Dendritic cell treated with granulocyte-macrophage colony-stimulating factor and Interleukin-4, amounts not matched to agents 40 ng/mL and 50 ng/mL, for 4 days (primary cell): ENCODE measurements at regions of chr5 and their contacts with region 1.

Region 1: DNA sequence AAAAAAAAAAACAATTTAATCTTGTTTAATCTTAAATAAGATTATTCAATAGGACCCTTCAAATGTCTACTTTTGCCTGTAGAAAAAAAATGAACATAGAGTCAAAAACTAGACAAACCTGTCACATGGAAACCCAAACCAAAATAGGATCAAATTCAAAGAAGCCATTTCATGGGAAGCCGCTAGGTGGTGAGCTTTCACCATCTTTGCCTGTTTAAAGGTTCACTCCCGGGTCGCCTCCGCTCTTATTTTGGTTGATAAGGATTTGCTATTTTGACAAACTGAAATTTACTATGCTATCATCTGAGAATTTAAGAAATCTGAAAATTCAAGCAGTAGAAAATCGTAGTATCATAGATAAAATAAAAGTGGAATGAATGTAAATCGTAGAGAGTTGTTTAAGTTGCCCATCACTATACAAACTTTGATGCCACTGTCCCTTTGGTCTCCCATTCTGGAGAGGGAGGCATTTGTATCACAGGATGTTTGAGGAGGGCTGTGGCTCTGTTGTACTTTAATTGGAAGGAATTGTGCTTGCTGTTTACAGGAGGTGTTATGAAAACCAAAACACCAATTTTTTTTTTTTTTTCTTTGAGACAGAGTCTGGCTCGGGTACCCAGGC is 43.5 kb upstream of the DNAH5 start:
- H3K4me3 Mint-ChIP-seq: no peak overlapping the region
- H3K27ac Mint-ChIP-seq: no peak overlapping the region
- H3K4me1 Mint-ChIP-seq: peaks cover 6% of the 10 kb centered on the region
- H3K27me3 Mint-ChIP-seq: peaks cover 5% of the 10 kb centered on the region

Region 2: GRCh38 chr5:13632681-13633080 is 355.3 kb before region 1 on chr5:
- intact Hi-C with region 1: no loop called
- H3K4me3 Mint-ChIP-seq: no peak overlapping the region
- H3K27ac Mint-ChIP-seq: no peak overlapping the region
- H3K4me1 Mint-ChIP-seq: no peaks in the 10 kb centered on the region
- H3K27me3 Mint-ChIP-seq: no peaks in the 10 kb centered on the region

Region 3: DNA sequence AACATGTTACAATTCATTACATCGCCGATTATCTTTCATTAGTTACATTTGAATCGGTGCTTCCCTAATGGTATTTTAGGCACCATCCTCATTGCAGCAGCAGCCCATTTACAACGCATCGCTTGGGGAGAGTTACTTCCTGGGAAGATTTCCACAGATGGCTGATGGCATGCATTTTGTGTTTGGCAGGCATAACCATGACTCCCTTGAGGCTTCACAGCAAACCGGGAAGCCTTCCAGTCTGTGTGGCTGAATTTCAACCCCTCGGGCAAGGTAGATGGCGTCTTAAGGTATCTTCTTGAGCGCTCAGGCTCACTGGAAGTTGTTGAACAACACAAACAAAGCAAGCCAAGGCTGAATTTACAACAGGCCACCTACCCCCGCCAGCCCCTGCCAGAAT is 41.8 kb before region 1 on chr5:
- intact Hi-C with region 1: no loop called
- H3K4me3 Mint-ChIP-seq: no peak overlapping the region
- H3K27ac Mint-ChIP-seq: no peak overlapping the region
- H3K4me1 Mint-ChIP-seq: no peaks in the 10 kb centered on the region
- H3K27me3 Mint-ChIP-seq: no peaks in the 10 kb centered on the region

Region 4: DNA sequence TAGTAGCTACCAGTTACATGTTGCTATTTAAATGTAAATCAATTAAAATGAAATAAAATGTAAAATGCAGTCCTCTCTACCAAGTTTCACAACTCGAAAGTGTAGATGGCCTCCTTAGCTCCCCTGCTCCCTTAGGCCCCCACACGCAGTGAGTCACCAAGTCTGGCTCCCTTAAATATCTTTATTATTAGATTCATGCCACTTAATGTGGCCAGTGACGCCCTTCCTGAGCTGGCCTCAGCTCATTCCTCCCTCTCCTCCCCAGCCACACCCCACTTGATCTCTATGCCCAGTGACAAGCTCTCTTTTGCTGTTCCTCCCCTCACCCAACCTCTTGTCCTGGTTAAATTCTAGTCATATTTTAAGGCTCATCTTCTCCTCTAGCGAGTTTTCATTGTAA is 45.0 kb after region 1 on chr5:
- intact Hi-C with region 1: no loop called
- H3K4me3 Mint-ChIP-seq: no peak overlapping the region
- H3K27ac Mint-ChIP-seq: no peak overlapping the region
- H3K4me1 Mint-ChIP-seq: peaks cover 14% of the 10 kb centered on the region
- H3K27me3 Mint-ChIP-seq: peaks cover 10% of the 10 kb centered on the region

Region 5: DNA sequence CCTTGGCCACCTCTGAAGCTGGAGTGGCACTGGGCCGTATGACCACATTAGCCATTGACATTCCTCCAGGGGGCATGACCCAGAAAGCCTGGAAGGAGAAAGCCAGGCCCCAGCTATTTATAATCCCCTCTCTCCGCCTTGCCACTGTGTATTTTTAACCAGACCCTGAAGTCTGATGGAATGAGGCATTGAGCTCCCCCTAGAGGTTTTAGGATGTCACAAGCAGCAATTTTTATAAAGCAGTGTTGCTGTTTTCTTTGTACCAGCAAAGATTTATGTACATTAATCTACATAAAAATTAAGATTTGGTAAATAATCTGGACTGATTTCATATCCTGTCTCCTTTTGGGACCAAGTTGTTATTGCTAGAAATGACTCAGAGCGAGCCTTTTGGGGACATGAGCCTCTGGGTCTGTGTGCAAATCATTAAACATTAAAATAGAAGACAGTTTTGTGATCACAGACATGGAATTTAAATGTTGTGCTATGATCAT is 282.3 kb after region 1 on chr5:
- intact Hi-C with region 1: loop called (anchors 1 kb)
- H3K4me3 Mint-ChIP-seq: no peak overlapping the region
- H3K27ac Mint-ChIP-seq: no peak overlapping the region
- H3K4me1 Mint-ChIP-seq: peaks cover 27% of the 10 kb centered on the region
- H3K27me3 Mint-ChIP-seq: no peaks in the 10 kb centered on the region

Region 6: GRCh38 chr5:14351845-14352712 is 364.1 kb after region 1 on chr5:
- intact Hi-C with region 1: loop called (anchors 5 kb)
- H3K4me3 Mint-ChIP-seq: peak overlapping the region; percentile 13
- H3K27ac Mint-ChIP-seq: peak overlapping the region; percentile 69
- H3K4me1 Mint-ChIP-seq: peaks cover 56% of the 10 kb centered on the region
- H3K27me3 Mint-ChIP-seq: no peaks in the 10 kb centered on the region

Region 7: DNA sequence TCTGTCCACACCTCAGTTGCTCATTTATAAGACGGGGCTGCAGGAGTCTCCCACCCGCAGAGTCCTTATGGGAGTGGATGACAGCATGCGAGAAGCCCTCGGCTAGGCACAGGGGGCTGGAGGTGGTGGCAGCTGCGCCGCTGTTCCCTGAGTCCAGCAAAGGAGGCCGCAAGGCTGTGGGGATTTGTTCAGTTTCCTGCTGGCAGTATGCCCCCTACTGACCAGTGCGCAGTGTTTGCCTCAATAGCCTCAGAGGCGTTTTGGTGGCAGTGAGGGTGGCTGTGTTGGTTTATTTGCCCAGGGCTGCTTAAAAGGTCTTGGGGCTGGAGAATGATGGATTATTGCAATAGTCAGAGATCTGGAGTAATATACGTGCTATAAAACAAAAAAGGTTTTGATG is 417.3 kb after region 1 on chr5:
- intact Hi-C with region 1: loop called (anchors 10 kb)
- H3K4me3 Mint-ChIP-seq: no peak overlapping the region
- H3K27ac Mint-ChIP-seq: no peak overlapping the region
- H3K4me1 Mint-ChIP-seq: no peaks in the 10 kb centered on the region
- H3K27me3 Mint-ChIP-seq: no peaks in the 10 kb centered on the region

Region 8: DNA sequence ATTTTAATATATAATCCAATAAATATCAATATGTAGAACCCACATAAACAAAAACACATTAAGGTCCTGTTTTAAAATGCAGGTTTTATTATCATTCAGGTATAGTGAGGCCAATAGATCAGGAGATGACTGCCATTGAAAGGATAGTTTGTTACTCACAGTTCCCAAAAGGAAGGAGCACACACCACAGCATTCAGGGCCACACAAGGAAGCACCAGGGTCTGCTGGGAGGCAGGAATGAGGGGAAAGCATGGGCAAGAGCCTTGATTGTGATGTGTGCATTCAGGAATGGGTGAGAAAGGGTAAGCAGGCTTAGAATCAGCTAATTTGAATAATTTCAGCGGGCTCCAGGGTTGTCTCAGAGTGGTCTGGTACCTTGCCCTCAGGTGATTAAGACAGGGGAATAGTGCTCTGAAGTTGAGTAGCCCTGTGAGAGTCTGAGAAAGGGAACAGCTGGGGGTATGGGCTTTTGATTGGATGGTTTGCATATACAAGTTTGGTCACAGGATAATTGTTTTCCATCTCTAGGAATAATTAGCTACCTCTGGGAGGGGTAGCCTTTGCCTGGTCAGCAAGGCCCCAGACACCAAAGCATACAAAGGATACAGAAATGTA is 656.8 kb after region 1 on chr5:
- intact Hi-C with region 1: loop called (anchors 5 kb)
- H3K4me3 Mint-ChIP-seq: no peak overlapping the region
- H3K27ac Mint-ChIP-seq: no peak overlapping the region
- H3K4me1 Mint-ChIP-seq: no peaks in the 10 kb centered on the region
- H3K27me3 Mint-ChIP-seq: no peaks in the 10 kb centered on the region